ENCODE measurements at regions of chr6 and their contacts with region 1.

Region 1: GRCh38 chr6:111483736-111484632 is 966 bp upstream of the REV3L start:
- DNase-seq: peak; percentile 83
- H3K4me3 Mint-ChIP-seq: peak overlapping the region; percentile 93
- H3K27ac Mint-ChIP-seq: peak overlapping the region; percentile 98
- H3K4me1 Mint-ChIP-seq: peaks cover 56% of the 10 kb centered on the region
- H3K27me3 Mint-ChIP-seq: no peaks in the 10 kb centered on the region

Region 2: GRCh38 chr6:110981202-110981600 is 502.8 kb before region 1 on chr6:
- intact Hi-C with region 1: loop called (anchors 1 kb)
- DNase-seq: no peak
- H3K4me3 Mint-ChIP-seq: peak overlapping the region; percentile 99
- H3K27ac Mint-ChIP-seq: peak overlapping the region; percentile 98
- H3K4me1 Mint-ChIP-seq: peaks cover 14% of the 10 kb centered on the region
- H3K27me3 Mint-ChIP-seq: no peaks in the 10 kb centered on the region

Region 3: GRCh38 chr6:111406200-111406721 is 77.7 kb before region 1 on chr6:
- intact Hi-C with region 1: loop called (anchors 2 kb)
- DNase-seq: no peak
- H3K4me3 Mint-ChIP-seq: no peak overlapping the region
- H3K27ac Mint-ChIP-seq: peak overlapping the region; percentile 45
- H3K4me1 Mint-ChIP-seq: peaks cover 30% of the 10 kb centered on the region
- H3K27me3 Mint-ChIP-seq: no peaks in the 10 kb centered on the region

Region 4: DNA sequence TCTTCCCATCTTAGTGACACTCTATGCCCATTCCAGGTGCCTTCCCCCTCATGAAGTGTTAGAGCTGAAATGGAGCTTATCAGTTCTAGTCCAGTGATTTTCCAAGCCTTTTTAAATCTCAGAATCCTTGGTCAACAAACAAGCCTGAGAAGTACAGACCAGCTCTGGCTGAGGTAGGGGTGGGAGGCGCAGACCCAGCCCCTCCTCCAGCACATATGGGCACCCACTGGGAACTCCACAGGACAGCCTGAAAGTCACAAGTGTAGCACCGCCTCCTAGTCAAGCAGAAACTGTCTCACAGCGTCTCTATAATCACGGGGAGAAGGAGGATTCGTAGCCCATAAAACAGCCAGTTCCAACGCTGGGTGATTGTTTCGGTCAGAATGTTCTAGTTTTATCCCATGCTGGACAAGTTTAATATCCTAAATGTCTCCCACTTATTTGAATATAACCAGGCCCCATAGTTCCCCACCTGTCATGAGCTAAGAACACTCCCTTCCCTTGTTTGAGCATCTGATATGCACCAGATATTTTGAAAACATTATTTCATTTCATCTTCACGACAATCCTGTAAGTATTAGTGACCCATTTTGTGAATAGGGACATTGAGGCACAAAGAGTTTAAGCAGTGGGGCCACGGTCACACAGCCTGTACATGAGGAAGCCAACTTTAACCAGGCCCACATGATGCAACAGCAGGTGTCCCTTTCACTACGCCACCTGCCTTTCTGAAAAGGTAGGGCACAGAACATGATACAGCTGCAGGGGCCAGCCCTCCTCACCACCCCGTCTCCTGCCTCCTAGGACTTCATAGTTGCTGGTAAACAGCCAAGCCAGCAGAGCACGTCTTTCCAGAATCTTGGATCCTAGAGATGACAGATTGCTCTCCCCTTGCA is 81.6 kb after region 1 on chr6:
- intact Hi-C with region 1: loop called (anchors 2 kb)
- DNase-seq: no peak
- H3K4me3 Mint-ChIP-seq: no peak overlapping the region
- H3K27ac Mint-ChIP-seq: peak overlapping the region; percentile 83
- H3K4me1 Mint-ChIP-seq: peaks cover 48% of the 10 kb centered on the region
- H3K27me3 Mint-ChIP-seq: no peaks in the 10 kb centered on the region

Region 5: GRCh38 chr6:111837641-111838500 is 353.9 kb after region 1 on chr6:
- intact Hi-C with region 1: loop called (anchors 2 kb)
- DNase-seq: peak; percentile 60
- H3K4me3 Mint-ChIP-seq: peak overlapping the region; percentile 70
- H3K27ac Mint-ChIP-seq: peak overlapping the region; percentile 94
- H3K4me1 Mint-ChIP-seq: peaks cover 61% of the 10 kb centered on the region
- H3K27me3 Mint-ChIP-seq: no peaks in the 10 kb centered on the region

Region 6: GRCh38 chr6:112087136-112087911 is 603.3 kb after region 1 on chr6 and contains the starts of genes FAM229B and TUBE1:
- intact Hi-C with region 1: loop called (anchors 1 kb)
- DNase-seq: peak; percentile 86
- H3K4me3 Mint-ChIP-seq: no peak within 1 kb of the TSS
- H3K27ac Mint-ChIP-seq: no peak within 1 kb of the TSS
- H3K4me1 Mint-ChIP-seq: no peaks in the 10 kb centered on the region
- H3K27me3 Mint-ChIP-seq: peaks cover 14% of the 10 kb centered on the region
- total RNA-seq, gene FAM229B: 1.1 and 2.2 TPM in 2 replicates
- total RNA-seq, gene TUBE1: 24.4 and 26.2 TPM in 2 replicates